Heart right ventricle (tissue), 16 donors: ENCODE measurements at regions of chr1 and their contacts with region 1.

Region 1: GRCh38 chr1:14733048-14733778 is 134.7 kb downstream of the KAZN start:
- DNase-seq: no peak
- ATAC-seq: no peak
- H3K4me3 ChIP-seq: no peak overlapping the region
- H3K27ac ChIP-seq: no peak overlapping the region
- H3K4me1 ChIP-seq: peaks cover 0 to 4% (median 0%) of the 10 kb centered on the region in 9 donors
- H3K27me3 ChIP-seq: peaks cover 0 to 64% (median 35%) of the 10 kb centered on the region in 7 donors
- CTCF ChIP-seq: no peak

Region 2: DNA sequence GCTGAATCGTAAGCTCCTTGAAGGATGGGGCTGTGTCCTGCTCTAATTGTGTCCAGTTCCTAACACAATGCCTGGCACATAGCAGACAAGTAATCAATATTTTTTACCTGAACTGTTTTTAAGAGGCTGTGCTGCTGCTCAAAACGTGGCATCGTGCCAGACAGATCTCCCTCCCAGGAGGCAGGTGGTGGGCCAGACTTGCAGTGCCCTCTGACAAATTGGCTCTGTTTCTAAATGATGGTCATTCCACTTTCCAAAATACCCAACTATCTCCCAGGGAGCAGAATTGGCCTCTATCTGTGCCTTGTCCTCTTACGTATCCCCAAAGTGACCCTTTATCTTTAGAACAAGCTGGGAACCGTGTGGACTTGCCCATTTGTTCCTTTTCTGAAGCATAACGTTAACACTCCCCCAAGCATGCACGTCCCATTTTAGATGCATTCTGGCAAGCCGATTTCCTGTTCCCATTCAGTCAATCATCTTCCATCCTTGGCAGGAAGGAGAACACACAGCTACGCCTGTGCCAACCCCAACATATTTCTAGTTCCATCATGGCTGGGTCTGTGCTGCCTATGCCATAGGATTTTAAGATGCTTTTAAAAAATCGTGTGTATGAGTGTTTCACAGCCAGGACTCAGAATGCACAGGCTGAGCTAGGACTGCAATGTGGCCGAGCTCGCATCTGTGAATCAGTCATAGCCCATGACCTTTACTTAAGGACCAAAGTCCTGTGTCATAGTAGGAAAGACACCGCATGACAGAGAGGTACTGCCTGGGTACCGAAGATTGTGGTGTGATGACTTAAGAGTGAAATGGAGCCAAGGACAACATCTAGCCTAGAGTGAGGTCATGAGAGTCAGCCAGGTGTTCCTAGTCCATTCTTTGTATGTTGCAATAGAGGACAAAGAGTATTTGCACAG is 624.6 kb before region 1 on chr1:
- intact Hi-C with region 1: loop called in 4 of 10 experiments (anchors 5 to 10 kb)
- DNase-seq: no peak
- ATAC-seq: peak in 7 of 8 donors; percentile 30 to 68 (median 35)
- H3K4me3 ChIP-seq: no peak overlapping the region
- H3K27ac ChIP-seq: no peak overlapping the region
- H3K4me1 ChIP-seq: peaks cover 0 to 11% (median 0%) of the 10 kb centered on the region in 9 donors
- H3K27me3 ChIP-seq: peaks cover 0 to 13% (median 0%) of the 10 kb centered on the region in 7 donors
- CTCF ChIP-seq: no peak

Region 3: DNA sequence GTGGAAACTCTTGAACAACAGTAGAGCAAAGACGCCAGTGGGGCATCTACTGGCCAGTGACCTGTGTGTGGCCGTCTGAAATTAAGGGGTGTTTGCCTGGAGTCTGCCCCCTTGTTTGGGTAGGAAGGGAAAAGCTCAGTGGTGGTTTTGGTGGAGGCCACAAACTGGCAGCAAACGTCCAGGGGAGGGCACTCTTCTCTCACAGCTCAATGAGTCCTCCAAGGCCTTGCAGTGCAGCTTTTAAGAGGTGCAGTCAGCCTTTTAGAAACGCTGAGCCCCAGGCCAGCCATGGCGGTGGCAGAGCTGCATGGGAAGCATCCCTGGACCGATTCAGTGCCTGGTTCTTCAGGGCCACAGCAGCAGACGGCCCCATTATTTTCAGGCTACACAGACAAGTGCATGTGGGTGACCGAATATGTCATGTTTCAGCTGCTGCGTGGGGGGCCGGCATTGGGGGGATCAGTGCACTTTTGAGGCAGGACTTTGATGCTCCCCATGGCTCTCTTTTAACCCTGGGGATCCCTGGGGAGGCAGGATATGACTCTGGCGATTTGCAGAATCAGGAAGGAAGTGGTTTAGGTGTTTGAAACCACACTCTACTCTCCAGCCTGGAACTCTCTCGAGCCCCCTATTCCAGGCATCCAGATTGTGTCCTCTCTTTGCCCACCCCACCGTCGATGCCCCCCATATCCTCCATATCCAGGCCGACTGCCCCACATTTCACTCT is 619.2 kb before region 1 on chr1:
- intact Hi-C with region 1: loop called in 4 of 10 experiments (anchors 5 to 10 kb)
- DNase-seq: peak; percentile 20 to 31
- ATAC-seq: peak; percentile 56 to 77 (median 62)
- H3K4me3 ChIP-seq: no peak overlapping the region
- H3K27ac ChIP-seq: no peak overlapping the region
- H3K4me1 ChIP-seq: peaks cover 0 to 6% (median 0%) of the 10 kb centered on the region in 9 donors
- H3K27me3 ChIP-seq: no peaks in the 10 kb centered on the region
- CTCF ChIP-seq: peak; percentile 14 to 67 (median 57)

Region 4: GRCh38 chr1:14634486-14634885 is 98.7 kb before region 1 on chr1:
- intact Hi-C with region 1: no loop called
- DNase-seq: no peak
- ATAC-seq: no peak
- H3K4me3 ChIP-seq: no peak overlapping the region
- H3K27ac ChIP-seq: no peak overlapping the region
- H3K4me1 ChIP-seq: no peaks in the 10 kb centered on the region
- H3K27me3 ChIP-seq: peaks cover 0 to 33% (median 11%) of the 10 kb centered on the region in 7 donors
- CTCF ChIP-seq: no peak

Region 5: DNA sequence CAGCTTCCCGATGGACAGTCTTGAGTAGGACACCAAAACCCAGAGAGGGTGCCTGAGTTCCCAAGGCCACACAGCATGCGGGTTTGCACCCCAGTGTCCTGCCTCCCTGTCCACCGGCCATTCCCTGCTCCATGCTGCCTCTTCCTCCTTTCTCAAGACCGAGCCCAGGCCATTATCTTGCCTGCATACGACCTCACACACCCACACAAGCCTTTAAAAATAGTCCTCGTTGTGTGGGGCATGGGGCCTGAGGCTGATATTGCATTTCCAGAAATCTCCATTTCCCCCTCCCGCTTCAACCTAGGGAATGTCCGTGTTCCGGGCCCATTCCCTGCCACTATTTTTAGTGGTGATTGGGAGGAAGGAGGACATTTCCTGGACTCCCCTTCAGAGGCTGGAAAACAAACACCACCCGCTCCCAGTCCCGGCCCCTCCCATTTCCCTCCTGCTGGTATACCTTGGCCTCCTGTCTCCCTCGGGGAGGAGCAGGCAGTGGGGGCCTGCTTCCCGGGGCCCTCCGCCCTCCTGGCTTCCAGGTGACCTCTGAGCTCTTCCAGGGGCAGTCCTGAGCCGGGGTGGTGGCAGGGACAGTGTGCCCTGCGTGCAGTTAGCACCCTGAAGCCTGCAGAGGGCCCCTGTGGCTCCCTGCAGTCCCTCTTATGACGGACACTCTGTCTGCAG is 288.0 kb after region 1 on chr1:
- intact Hi-C with region 1: no loop called
- DNase-seq: peak; percentile 43 to 72
- ATAC-seq: peak; percentile 69 to 93 (median 84)
- H3K4me3 ChIP-seq: no peak overlapping the region
- H3K27ac ChIP-seq: peak overlapping the region in 7 of 10 donors; percentile 31 to 58 (median 50)
- H3K4me1 ChIP-seq: peaks cover 0 to 37% (median 9%) of the 10 kb centered on the region in 9 donors
- H3K27me3 ChIP-seq: no peaks in the 10 kb centered on the region
- CTCF ChIP-seq: peak in 1 of 9 donors; percentile 2

Region 6: GRCh38 chr1:15046487-15047165 is 313.4 kb after region 1 on chr1:
- intact Hi-C with region 1: no loop called
- DNase-seq: peak; percentile 55 to 66
- ATAC-seq: peak; percentile 63 to 86 (median 77)
- H3K4me3 ChIP-seq: no peak overlapping the region
- H3K27ac ChIP-seq: no peak overlapping the region
- H3K4me1 ChIP-seq: no peaks in the 10 kb centered on the region
- H3K27me3 ChIP-seq: no peaks in the 10 kb centered on the region
- CTCF ChIP-seq: peak; percentile 76 to 96 (median 94)